ENCODE measurements at regions of chr6 and their contacts with region 1.

Region 1: DNA sequence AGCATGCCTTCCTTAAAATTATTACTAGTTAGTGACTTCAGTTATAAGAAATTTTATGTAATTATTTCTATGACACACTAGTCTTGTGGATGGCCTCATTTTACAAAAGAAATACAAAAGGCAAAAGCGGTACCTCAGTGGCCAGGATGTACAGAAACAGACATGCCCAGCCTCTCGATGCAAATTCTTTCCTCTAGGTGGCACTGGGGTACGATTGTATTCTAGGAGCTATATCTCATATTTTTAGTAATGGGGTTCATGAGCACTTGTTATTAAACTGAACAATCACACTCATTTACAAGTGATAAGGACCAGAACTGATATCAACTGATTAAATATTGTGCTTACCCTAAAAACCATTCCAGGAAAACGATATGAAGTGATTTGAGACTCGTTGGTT is 59.8 kb downstream of the SOD2 start:
- DNase-seq: peak; percentile 18 to 30
- ATAC-seq: peak in 1 of 2 experiments; percentile 63; a peak in 1 of 6 replicates
- H3K4me3 ChIP-seq: no peak overlapping the region
- H3K27ac ChIP-seq: no peak overlapping the region
- H3K4me1 ChIP-seq: no peaks in the 10 kb centered on the region
- CTCF ChIP-seq: peak; percentile 47
- EP300 ChIP-seq: no peak
- POLR2A ChIP-seq: no peak
- RAD21 ChIP-seq: no peak; a peak in 1 of 5 replicates

Region 2: DNA sequence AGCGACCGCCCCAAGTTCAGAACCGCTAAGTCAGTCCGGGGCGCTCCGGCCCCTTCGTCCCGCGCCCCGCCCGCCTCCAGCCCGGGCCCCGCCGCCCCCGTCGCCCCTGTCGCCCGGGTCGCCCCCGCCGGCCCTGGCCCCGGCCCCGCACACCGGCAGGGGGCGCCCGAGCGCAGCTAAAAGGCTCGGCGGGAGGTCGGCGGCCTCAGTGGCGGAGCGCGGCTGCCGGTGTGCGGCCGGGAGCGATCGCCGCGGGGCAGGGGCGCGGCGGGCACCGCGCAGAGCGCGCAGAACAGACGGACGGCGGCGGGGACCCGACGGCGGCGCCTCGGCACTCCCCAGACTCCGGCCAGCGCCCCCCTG is 464.0 kb before region 1 on chr6 and contains the start of gene FNDC1:
- CTCF ChIA-PET with region 1: interaction called, 12 read pairs
- POLR2A ChIA-PET with region 1: no interaction called
- DNase-seq: peak; percentile 2 to 44
- ATAC-seq: peak; percentile 71 to 76
- H3K4me3 ChIP-seq: peak within 1 kb of the TSS; percentile 53
- H3K27ac ChIP-seq: peak within 1 kb of the TSS in 1 of 2 experiments; percentile 68; a peak in 2 of 6 replicates
- H3K4me1 ChIP-seq: peaks cover 7% of the 10 kb centered on the region; the same call in 2 of the 3 replicates
- CTCF ChIP-seq: peak; percentile 70
- EP300 ChIP-seq: no peak
- POLR2A ChIP-seq: no peak
- RAD21 ChIP-seq: no peak; a peak in 2 of 5 replicates
- polyA plus RNA-seq, gene FNDC1: 0.04 TPM in 1 of 2 replicates, not detected in the other

Region 3: GRCh38 chr6:159646733-159647132 is 13.5 kb after region 1 on chr6:
- CTCF ChIA-PET with region 1: interaction called, 10 read pairs
- POLR2A ChIA-PET with region 1: no interaction called
- DNase-seq: no peak
- ATAC-seq: no peak
- H3K4me3 ChIP-seq: no peak overlapping the region
- H3K27ac ChIP-seq: no peak overlapping the region
- H3K4me1 ChIP-seq: peaks cover 3% of the 10 kb centered on the region; the same call in 1 of the 3 replicates
- CTCF ChIP-seq: no peak
- EP300 ChIP-seq: no peak
- POLR2A ChIP-seq: no peak
- RAD21 ChIP-seq: no peak

Region 4: DNA sequence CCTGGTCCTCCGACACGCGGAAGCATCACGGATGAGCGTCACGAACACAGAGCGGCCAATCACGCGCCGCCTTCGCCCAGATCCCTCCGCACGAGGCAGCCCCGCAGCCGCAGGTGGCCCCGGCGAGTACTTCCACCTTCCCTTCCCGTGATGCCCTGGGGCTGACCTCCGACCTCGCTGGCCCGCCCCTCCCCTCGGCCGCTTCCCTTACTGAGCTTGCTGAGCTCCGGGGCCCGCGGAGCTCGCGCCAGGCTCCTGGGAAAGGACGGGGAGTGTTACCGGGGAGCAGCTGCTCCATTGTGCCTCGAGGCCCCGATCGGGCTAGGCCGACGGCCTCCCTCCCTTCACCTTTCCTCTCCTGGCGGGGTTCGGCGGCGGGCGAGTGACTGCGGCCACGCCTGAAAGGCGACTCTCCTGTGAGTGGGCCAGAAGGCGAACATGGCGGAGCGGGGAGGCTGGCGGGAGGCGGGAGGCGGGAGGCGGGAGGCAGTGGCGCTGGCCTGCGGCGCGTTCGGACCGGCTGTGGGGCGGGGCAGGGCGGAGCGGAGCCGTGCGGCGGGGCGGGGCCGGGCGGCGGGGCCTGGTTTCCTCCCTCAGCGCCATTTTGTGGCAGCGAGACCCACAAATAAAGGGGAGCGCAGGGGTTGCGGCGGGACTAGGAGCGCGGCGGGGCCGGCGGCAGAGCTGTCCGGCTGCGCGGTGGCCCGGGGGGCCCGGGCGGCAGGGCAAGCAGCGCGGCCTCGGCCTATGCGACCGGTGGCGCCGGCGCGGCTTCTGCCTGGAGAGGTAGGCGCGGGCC is 93.9 kb after region 1 on chr6 and contains the start of gene WTAP:
- CTCF ChIA-PET with region 1: no interaction called
- POLR2A ChIA-PET with region 1: interaction called, 11 read pairs
- DNase-seq: peak; percentile 74 to 97
- ATAC-seq: peak; percentile 92 to 94
- H3K4me3 ChIP-seq: peak within 1 kb of the TSS; percentile 79
- H3K27ac ChIP-seq: peak within 1 kb of the TSS; percentile 98 to 99
- H3K4me1 ChIP-seq: peaks cover 22% of the 10 kb centered on the region; the same call in 2 of the 3 replicates
- CTCF ChIP-seq: no peak
- EP300 ChIP-seq: no peak
- POLR2A ChIP-seq: peak; percentile 72
- RAD21 ChIP-seq: no peak
- polyA plus RNA-seq, gene WTAP: 42.4 and 46.1 TPM in 2 replicates

Region 5: GRCh38 chr6:159809149-159809548 is 176.0 kb after region 1 on chr6:
- CTCF ChIA-PET with region 1: no interaction called
- POLR2A ChIA-PET with region 1: no interaction called
- DNase-seq: no peak
- ATAC-seq: no peak
- H3K4me3 ChIP-seq: no peak overlapping the region
- H3K27ac ChIP-seq: no peak overlapping the region
- H3K4me1 ChIP-seq: no peaks in the 10 kb centered on the region
- CTCF ChIP-seq: no peak
- EP300 ChIP-seq: no peak
- POLR2A ChIP-seq: no peak
- RAD21 ChIP-seq: no peak